Activated naive CD4-positive, alpha-beta T cell treated with anti-CD3 and anti-CD28 coated beads for 36 hours (primary cell): ENCODE measurements at regions of chr9 and their contacts with region 1.

Region 1: DNA sequence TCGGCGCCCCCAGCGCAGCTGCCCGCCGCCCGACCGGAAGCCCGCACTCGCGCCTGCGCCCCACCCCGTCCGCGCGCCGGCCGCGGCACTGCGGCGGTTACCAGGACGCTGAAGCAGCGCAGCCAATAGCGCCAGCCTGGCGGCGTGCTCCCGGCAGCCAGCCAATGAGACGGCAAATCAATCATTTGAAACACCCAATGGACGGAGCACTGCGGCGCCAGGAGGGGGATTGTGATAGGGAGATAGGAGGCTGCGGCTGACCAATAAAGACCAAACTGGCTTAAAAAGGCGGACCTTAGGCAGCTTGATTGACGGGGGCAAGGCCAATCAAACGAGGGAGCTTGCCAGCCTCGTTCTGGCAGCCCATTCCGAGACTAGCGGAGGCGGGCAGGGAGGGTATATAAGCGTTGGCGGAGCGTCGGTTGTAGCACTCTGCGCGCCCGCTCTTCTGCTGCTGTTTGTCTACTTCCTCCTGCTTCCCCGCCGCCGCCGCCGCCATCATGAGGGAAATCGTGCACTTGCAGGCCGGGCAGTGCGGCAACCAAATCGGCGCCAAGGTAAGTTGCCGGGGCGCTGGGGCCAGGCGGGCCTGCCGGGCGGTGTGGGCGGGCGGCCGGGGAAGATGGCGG is at the start of gene TUBB4B:
- DNase-seq: peak; percentile 99
- H3K4me3 Mint-ChIP-seq: peak within 1 kb of the TSS; percentile 88
- H3K27ac Mint-ChIP-seq: peak within 1 kb of the TSS; percentile 94
- H3K4me1 Mint-ChIP-seq: peaks cover 34% of the 10 kb centered on the region
- H3K27me3 Mint-ChIP-seq: no peaks in the 10 kb centered on the region
- total RNA-seq, gene TUBB4B: 193 to 196 TPM

Region 2: GRCh38 chr9:136978073-136978864 is 262.7 kb before region 1 on chr9:
- CTCF ChIA-PET with region 1: no interaction called
- intact Hi-C with region 1: no loop called
- DNase-seq: peak; percentile 66
- H3K4me3 Mint-ChIP-seq: no peak overlapping the region
- H3K27ac Mint-ChIP-seq: no peak overlapping the region
- H3K4me1 Mint-ChIP-seq: peaks cover 14% of the 10 kb centered on the region
- H3K27me3 Mint-ChIP-seq: peaks cover 7% of the 10 kb centered on the region

Region 3: GRCh38 chr9:137114610-137115391 is 126.2 kb before region 1 on chr9 and contains the start of gene DPP7:
- CTCF ChIA-PET with region 1: interaction called, 8 read pairs
- intact Hi-C with region 1: loop called (anchors 1 kb)
- DNase-seq: peak; percentile 74
- H3K4me3 Mint-ChIP-seq: peak within 1 kb of the TSS; percentile 73
- H3K27ac Mint-ChIP-seq: no peak within 1 kb of the TSS
- H3K4me1 Mint-ChIP-seq: peaks cover 14% of the 10 kb centered on the region
- H3K27me3 Mint-ChIP-seq: no peaks in the 10 kb centered on the region
- total RNA-seq, gene DPP7: 162 to 167 TPM

Region 4: GRCh38 chr9:137150617-137151457 is 90.1 kb before region 1 on chr9:
- CTCF ChIA-PET with region 1: no interaction called
- intact Hi-C with region 1: loop called (anchors 1 kb)
- DNase-seq: peak; percentile 89
- H3K4me3 Mint-ChIP-seq: no peak overlapping the region
- H3K27ac Mint-ChIP-seq: peak overlapping the region; percentile 61
- H3K4me1 Mint-ChIP-seq: peaks cover 7% of the 10 kb centered on the region
- H3K27me3 Mint-ChIP-seq: peaks cover 16% of the 10 kb centered on the region

Region 5: GRCh38 chr9:137200311-137201204 is 40.4 kb before region 1 on chr9 and contains the start of gene TPRN:
- CTCF ChIA-PET with region 1: interaction called, 7 read pairs
- intact Hi-C with region 1: loop called (anchors 5 kb)
- DNase-seq: peak; percentile 99
- H3K4me3 Mint-ChIP-seq: peak within 1 kb of the TSS; percentile 80
- H3K27ac Mint-ChIP-seq: peak within 1 kb of the TSS; percentile 56
- H3K4me1 Mint-ChIP-seq: peaks cover 33% of the 10 kb centered on the region
- H3K27me3 Mint-ChIP-seq: no peaks in the 10 kb centered on the region
- total RNA-seq, gene TPRN: 2.1 to 2.6 TPM

Region 6: GRCh38 chr9:137295238-137295811 is 54.4 kb after region 1 on chr9:
- CTCF ChIA-PET with region 1: no interaction called
- intact Hi-C with region 1: no loop called
- DNase-seq: peak; percentile 46
- H3K4me3 Mint-ChIP-seq: peak overlapping the region; percentile 47
- H3K27ac Mint-ChIP-seq: no peak overlapping the region
- H3K4me1 Mint-ChIP-seq: peaks cover 8% of the 10 kb centered on the region
- H3K27me3 Mint-ChIP-seq: peaks cover 27% of the 10 kb centered on the region

Region 7: DNA sequence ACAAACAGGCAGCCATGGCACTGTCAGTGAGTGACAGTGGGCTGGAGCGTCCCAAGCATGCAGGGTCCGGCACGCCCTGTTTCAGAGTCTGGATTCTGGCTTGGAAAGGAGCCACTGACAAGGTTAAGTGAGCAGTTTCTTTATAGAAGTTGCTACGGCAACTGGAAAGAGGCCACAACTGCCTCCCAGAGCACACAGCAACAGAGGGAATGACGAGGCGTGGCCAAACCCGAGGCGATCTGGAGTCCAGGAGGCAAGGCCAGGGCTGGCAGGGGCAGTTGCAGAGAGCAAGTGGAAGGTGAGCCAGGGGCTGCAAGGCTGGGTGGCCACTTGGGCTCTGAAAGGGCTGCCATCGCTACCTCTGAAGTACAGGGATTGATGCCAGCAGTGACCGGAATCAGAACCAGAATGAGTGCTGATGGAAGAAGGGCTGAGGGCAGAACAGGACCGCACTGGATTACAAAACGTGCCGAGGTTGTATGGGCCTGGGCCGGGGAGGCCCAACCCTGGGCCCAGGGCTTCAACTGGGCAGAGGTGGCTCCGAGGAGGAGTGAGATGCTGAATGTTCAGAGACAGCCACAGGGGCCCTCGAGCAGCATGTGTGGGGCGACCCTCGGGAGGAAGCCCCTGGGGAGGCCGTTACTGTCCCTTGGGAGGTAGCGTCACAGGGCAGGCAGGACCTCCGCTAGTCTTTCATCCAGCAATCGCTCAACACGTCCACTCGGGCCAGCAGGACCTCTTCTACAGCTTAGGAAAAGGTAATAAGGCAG is 315.3 kb after region 1 on chr9:
- CTCF ChIA-PET with region 1: no interaction called
- intact Hi-C with region 1: no loop called
- DNase-seq: no peak
- H3K4me3 Mint-ChIP-seq: no peak overlapping the region
- H3K27ac Mint-ChIP-seq: no peak overlapping the region
- H3K4me1 Mint-ChIP-seq: peaks cover 12% of the 10 kb centered on the region
- H3K27me3 Mint-ChIP-seq: no peaks in the 10 kb centered on the region